ENCODE measurements at regions of chr2 and their contacts with region 1.

Region 1: DNA sequence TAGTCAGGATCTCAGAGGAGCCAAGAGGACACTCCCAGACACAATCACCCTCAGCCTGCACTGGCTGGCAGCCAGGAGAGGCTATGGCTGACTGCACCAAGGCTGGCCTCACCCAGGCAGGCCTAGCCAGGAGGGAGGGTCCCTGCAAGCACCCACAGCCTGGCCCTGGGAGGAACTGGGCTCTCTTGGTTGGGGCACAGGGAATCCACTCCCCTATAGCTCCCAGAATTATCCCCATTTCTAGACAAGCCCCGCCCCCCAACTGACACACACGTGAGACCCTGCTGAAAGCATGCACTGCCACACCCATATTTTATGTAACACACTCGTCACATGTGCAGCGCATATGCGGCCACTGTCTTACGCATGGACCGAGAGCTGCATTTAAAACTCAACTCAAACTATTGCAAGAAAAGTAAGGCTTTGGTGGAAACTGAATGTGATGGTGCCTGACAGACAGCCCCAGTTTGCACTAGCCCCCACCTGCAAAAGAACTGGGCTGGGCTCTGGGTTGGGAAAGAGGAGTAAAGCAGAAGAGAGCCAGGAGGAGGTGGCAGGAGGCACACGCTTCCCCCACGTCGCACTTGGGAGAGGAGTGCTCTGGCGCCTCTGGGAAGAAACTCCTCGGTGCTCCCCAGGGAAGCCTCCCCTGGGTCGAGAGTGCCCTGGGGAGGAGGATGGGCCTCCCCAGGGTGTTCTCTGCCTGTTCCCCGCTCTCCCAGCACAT is 28.9 kb upstream of the ARHGEF4 start:
- DNase-seq: peak; percentile 55 to 84
- H3K4me3 ChIP-seq: no peak overlapping the region
- H3K27ac ChIP-seq: peak overlapping the region; percentile 99
- H3K4me1 ChIP-seq: peaks cover 40% of the 10 kb centered on the region
- H3K27me3 ChIP-seq: no peaks in the 10 kb centered on the region
- CTCF ChIP-seq: no peak

Region 2: GRCh38 chr2:130824492-130825061 is 16.8 kb after region 1 on chr2:
- CTCF ChIA-PET with region 1: no interaction called
- POLR2A ChIA-PET with region 1: interaction called, 4 read pairs
- intact Hi-C with region 1: loop called (anchors 1 kb)
- DNase-seq: peak; percentile 55 to 82
- H3K4me3 ChIP-seq: no peak overlapping the region
- H3K27ac ChIP-seq: peak overlapping the region; percentile 17
- H3K4me1 ChIP-seq: peaks cover 69% of the 10 kb centered on the region
- H3K27me3 ChIP-seq: no peaks in the 10 kb centered on the region
- CTCF ChIP-seq: no peak

Region 3: GRCh38 chr2:130836501-130837174 is 28.8 kb after region 1 on chr2 and contains the start of gene ARHGEF4:
- CTCF ChIA-PET with region 1: no interaction called
- POLR2A ChIA-PET with region 1: no interaction called
- intact Hi-C with region 1: loop called (anchors 2 kb)
- DNase-seq: peak; percentile 42 to 89
- H3K4me3 ChIP-seq: peak within 1 kb of the TSS; percentile 75
- H3K27ac ChIP-seq: no peak within 1 kb of the TSS
- H3K4me1 ChIP-seq: peaks cover 10% of the 10 kb centered on the region
- H3K27me3 ChIP-seq: no peaks in the 10 kb centered on the region
- CTCF ChIP-seq: no peak
- total RNA-seq, gene ARHGEF4: 16.1 and 20.0 TPM in 2 replicates

Region 4: DNA sequence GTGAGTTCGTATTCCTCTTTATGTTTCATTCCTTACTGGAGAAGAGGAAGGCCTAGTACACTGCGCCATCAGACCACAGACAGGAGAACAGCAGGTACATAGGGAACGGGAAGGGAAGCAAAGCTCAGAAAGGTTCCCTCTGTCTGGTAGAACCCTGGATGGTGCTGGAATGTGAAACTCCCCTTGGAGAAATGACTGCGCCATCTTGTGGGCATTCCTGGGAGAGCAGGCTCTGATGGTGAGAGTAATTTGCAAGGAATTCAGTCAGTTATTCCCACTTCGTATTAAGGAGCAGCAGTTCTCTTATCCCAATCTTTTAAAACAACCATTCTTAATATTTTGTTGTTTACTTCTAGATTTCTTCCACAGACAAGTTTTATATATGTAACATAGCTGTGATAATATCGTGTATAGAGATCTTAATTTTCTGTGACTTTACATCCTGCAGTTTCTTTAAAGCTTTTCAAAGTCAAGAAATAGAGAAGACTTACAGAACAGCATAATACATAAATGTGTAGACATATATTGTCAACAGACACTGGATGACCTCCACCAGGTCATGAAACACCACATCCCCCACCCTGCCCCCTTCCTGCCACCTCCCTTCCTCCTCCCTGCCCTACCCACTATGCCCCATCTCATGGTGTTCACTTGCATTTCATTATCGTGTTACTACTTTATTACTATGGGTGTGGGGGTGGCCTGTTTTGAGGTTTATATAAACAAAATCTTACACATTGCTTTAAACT is 112.8 kb after region 1 on chr2:
- CTCF ChIA-PET with region 1: interaction called, 11 read pairs
- POLR2A ChIA-PET with region 1: no interaction called
- intact Hi-C with region 1: no loop called
- DNase-seq: peak; percentile 61 to 71
- H3K4me3 ChIP-seq: no peak overlapping the region
- H3K27ac ChIP-seq: no peak overlapping the region
- H3K4me1 ChIP-seq: no peaks in the 10 kb centered on the region
- H3K27me3 ChIP-seq: no peaks in the 10 kb centered on the region
- CTCF ChIP-seq: peak; percentile 92

Region 5: GRCh38 chr2:131093006-131093695 is 285.3 kb after region 1 on chr2 and contains the start of gene FAM168B:
- CTCF ChIA-PET with region 1: no interaction called
- POLR2A ChIA-PET with region 1: interaction called, 11 read pairs
- intact Hi-C with region 1: no loop called
- DNase-seq: peak; percentile 57 to 89
- H3K4me3 ChIP-seq: peak within 1 kb of the TSS; percentile 99
- H3K27ac ChIP-seq: peak within 1 kb of the TSS; percentile 57
- H3K4me1 ChIP-seq: peaks cover 6% of the 10 kb centered on the region; the same call in 1 of the 2 replicates
- H3K27me3 ChIP-seq: no peaks in the 10 kb centered on the region
- CTCF ChIP-seq: no peak
- total RNA-seq, gene FAM168B: 66.6 and 79.6 TPM in 2 replicates